Psoas muscle (tissue), 8 donors: ENCODE measurements at regions of chr7 and their contacts with region 1.

Region 1: DNA sequence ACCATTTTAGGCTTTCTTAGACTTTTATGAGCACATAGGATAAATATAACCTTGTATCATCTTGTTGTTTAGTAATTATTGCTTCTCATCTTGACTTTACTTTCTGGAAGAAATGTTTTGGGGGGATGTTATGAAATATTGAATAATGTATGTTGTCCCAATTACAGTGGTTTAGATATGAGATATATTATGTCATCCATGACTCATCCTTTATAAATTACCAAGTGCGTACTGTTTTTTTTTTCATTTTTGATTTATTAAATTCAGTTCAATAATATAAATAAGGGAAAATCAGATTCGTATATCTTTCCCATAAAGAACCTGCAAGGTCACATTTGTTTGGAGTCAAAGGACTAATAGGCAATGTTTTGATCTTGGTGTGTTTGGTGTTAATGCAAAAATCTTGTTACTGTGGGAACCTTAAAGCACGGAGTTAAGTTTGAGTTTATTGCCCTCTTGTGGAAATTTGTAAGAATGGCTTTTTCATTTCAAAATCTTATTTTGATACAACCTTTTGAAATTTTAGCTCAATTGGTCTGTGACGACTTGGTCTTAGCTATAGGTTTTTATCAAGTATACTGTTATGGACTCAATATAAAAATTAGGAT is 108.6 kb downstream of the SRI start:
- DNase-seq: no peak
- ATAC-seq: peak in 3 of 4 donors; percentile 26 to 78 (median 54)
- H3K4me3 ChIP-seq: no peak overlapping the region
- H3K27ac ChIP-seq: peak overlapping the region; percentile 19
- H3K4me1 ChIP-seq: peaks cover 13% of the 10 kb centered on the region
- H3K27me3 ChIP-seq: no peaks in the 10 kb centered on the region
- CTCF ChIP-seq: peak; percentile 59

Region 2: GRCh38 chr7:87506246-87507180 is 604.7 kb before region 1 on chr7:
- intact Hi-C with region 1: loop called in 1 of 2 experiments (anchors 5 kb)
- DNase-seq: no peak
- ATAC-seq: peak in 2 of 4 donors; percentile 13 to 42
- H3K4me3 ChIP-seq: no peak overlapping the region
- H3K27ac ChIP-seq: no peak overlapping the region
- H3K4me1 ChIP-seq: no peaks in the 10 kb centered on the region
- H3K27me3 ChIP-seq: no peaks in the 10 kb centered on the region
- CTCF ChIP-seq: peak; percentile 56

Region 3: DNA sequence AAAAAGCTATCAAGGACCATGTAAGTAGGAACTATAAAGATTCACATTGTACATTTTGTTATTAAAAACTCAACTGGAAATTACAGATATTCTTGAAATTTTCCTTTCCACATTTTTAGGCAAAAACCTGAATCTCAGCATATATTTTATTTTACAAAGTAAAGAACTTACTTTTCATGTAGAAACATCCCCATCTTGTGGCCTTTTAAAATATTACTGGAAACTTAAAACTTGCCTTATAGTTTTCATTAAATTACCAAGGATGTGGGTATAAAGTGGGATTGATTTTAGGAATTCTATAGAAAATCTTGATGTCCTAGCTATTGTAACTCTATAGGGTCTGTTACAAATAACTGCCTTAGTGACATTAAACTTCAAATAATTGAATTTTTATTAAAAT is 224.4 kb before region 1 on chr7:
- intact Hi-C with region 1: loop called in 1 of 2 experiments (anchors 10 kb)
- DNase-seq: no peak
- ATAC-seq: no peak
- H3K4me3 ChIP-seq: no peak overlapping the region
- H3K27ac ChIP-seq: no peak overlapping the region
- H3K4me1 ChIP-seq: no peaks in the 10 kb centered on the region
- H3K27me3 ChIP-seq: no peaks in the 10 kb centered on the region
- CTCF ChIP-seq: peak; percentile 40

Region 4: GRCh38 chr7:87933945-87934698 is 177.1 kb before region 1 on chr7 and contains the start of gene ADAM22:
- intact Hi-C with region 1: loop called (anchors 10 kb)
- DNase-seq: peak; percentile 83 to 93
- ATAC-seq: peak; percentile 90 to 99 (median 98)
- H3K4me3 ChIP-seq: peak within 1 kb of the TSS; percentile 80
- H3K27ac ChIP-seq: peak within 1 kb of the TSS; percentile 11
- H3K4me1 ChIP-seq: peaks cover 4% of the 10 kb centered on the region
- H3K27me3 ChIP-seq: no peaks in the 10 kb centered on the region
- CTCF ChIP-seq: no peak
- total RNA-seq, gene ADAM22: 0.42 to 7.0 (median 1.0) TPM